ENCODE measurements at regions of chr4 and their contacts with region 1.

Region 1: GRCh38 chr4:42471896-42472295 is 74.6 kb downstream of the SHISA3 start:
- DNase-seq: no peak
- ATAC-seq: no peak
- H3K4me3 ChIP-seq: no peak overlapping the region
- H3K27ac ChIP-seq: no peak overlapping the region
- H3K4me1 ChIP-seq: no peaks in the 10 kb centered on the region
- H3K27me3 ChIP-seq: no peaks in the 10 kb centered on the region
- CTCF ChIP-seq: no peak
- POLR2A ChIP-seq: no peak
- RAD21 ChIP-seq: no peak

Region 2: GRCh38 chr4:42510225-42510624 is 38.3 kb after region 1 on chr4:
- CTCF ChIA-PET with region 1: no interaction called
- POLR2A ChIA-PET with region 1: interaction called, 12 read pairs
- dilution Hi-C with region 1: no loop called
- in situ Hi-C with region 1: no loop called
- intact Hi-C with region 1: no loop called
- DNase-seq: no peak
- ATAC-seq: no peak
- H3K4me3 ChIP-seq: no peak overlapping the region
- H3K27ac ChIP-seq: no peak overlapping the region
- H3K4me1 ChIP-seq: no peaks in the 10 kb centered on the region
- H3K27me3 ChIP-seq: no peaks in the 10 kb centered on the region
- CTCF ChIP-seq: no peak
- POLR2A ChIP-seq: no peak
- RAD21 ChIP-seq: no peak

Measured in IMR-90 (cell line).